ENCODE measurements at regions of chr19 and their contacts with region 1.

Region 1: GRCh38 chr19:50777754-50778303 is 7.6 kb downstream of the GPR32 start:
- DNase-seq: peak; percentile 15
- ATAC-seq: no peak
- H3K4me3 ChIP-seq: no peak overlapping the region
- H3K4me3 Mint-ChIP-seq: no peak overlapping the region
- H3K27ac ChIP-seq: no peak overlapping the region
- H3K27ac Mint-ChIP-seq: no peak overlapping the region
- H3K4me1 ChIP-seq: peaks cover 0 to 8% of the 10 kb centered on the region in 2 donors
- H3K4me1 Mint-ChIP-seq: peaks cover 4% of the 10 kb centered on the region
- H3K27me3 ChIP-seq: peaks cover 0 to 62% (median 26%) of the 10 kb centered on the region in 4 experiments
- H3K27me3 Mint-ChIP-seq: peaks cover 64% of the 10 kb centered on the region
- CTCF ChIP-seq: no peak

Region 2: GRCh38 chr19:50252111-50252886 is 525.5 kb before region 1 on chr19:
- CTCF ChIA-PET with region 1: interaction called, 17 read pairs
- POLR2A ChIA-PET with region 1: no interaction called
- intact Hi-C with region 1: no loop called
- DNase-seq: peak; percentile 61
- ATAC-seq: peak; percentile 45
- H3K4me3 ChIP-seq: no peak overlapping the region
- H3K4me3 Mint-ChIP-seq: no peak overlapping the region
- H3K27ac ChIP-seq: no peak overlapping the region
- H3K27ac Mint-ChIP-seq: no peak overlapping the region
- H3K4me1 ChIP-seq: no peaks in the 10 kb centered on the region
- H3K4me1 Mint-ChIP-seq: peaks cover 5% of the 10 kb centered on the region
- H3K27me3 ChIP-seq: peaks cover 0 to 9% (median 0%) of the 10 kb centered on the region in 4 experiments
- H3K27me3 Mint-ChIP-seq: peaks cover 18% of the 10 kb centered on the region
- CTCF ChIP-seq: peak; percentile 74

Region 3: DNA sequence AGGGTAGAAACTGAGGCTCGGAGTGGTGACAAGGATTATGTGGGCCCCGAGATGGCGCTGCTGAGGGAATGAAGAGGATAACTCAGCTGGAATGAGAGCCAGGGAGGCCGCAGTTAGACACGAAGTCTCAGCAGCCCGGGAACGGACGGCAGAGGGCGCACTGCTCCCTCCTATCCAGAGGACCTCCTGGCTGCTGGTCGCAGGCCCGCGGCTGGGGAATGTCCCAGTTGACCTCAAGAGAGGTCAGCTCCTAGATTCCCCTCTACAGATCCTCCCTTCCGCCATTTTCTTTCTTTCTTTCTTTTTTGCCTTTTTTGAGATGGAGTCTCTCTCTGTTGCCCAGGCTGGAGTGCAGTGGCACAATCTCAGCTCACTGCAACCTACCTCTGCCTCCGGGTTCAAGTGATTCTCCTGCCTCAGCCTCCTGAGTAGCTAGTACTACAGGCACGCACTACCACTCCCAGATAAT is 240.0 kb before region 1 on chr19:
- CTCF ChIA-PET with region 1: interaction called, 15 read pairs
- POLR2A ChIA-PET with region 1: no interaction called
- intact Hi-C with region 1: loop called (anchors 1 kb)
- DNase-seq: peak; percentile 66
- ATAC-seq: peak; percentile 36
- H3K4me3 ChIP-seq: no peak overlapping the region
- H3K4me3 Mint-ChIP-seq: no peak overlapping the region
- H3K27ac ChIP-seq: no peak overlapping the region
- H3K27ac Mint-ChIP-seq: no peak overlapping the region
- H3K4me1 ChIP-seq: no peaks in the 10 kb centered on the region
- H3K4me1 Mint-ChIP-seq: no peaks in the 10 kb centered on the region
- H3K27me3 ChIP-seq: peaks cover 0 to 8% (median 0%) of the 10 kb centered on the region in 4 experiments
- H3K27me3 Mint-ChIP-seq: peaks cover 13% of the 10 kb centered on the region
- CTCF ChIP-seq: peak; percentile 74

Region 4: GRCh38 chr19:50590191-50590590 is 187.6 kb before region 1 on chr19:
- CTCF ChIA-PET with region 1: no interaction called
- POLR2A ChIA-PET with region 1: no interaction called
- intact Hi-C with region 1: no loop called
- DNase-seq: no peak
- ATAC-seq: no peak
- H3K4me3 ChIP-seq: no peak overlapping the region
- H3K4me3 Mint-ChIP-seq: no peak overlapping the region
- H3K27ac ChIP-seq: no peak overlapping the region
- H3K27ac Mint-ChIP-seq: no peak overlapping the region
- H3K4me1 ChIP-seq: no peaks in the 10 kb centered on the region
- H3K4me1 Mint-ChIP-seq: no peaks in the 10 kb centered on the region
- H3K27me3 ChIP-seq: no peaks in the 10 kb centered on the region
- H3K27me3 Mint-ChIP-seq: peaks cover 20% of the 10 kb centered on the region
- CTCF ChIP-seq: no peak

Region 5: DNA sequence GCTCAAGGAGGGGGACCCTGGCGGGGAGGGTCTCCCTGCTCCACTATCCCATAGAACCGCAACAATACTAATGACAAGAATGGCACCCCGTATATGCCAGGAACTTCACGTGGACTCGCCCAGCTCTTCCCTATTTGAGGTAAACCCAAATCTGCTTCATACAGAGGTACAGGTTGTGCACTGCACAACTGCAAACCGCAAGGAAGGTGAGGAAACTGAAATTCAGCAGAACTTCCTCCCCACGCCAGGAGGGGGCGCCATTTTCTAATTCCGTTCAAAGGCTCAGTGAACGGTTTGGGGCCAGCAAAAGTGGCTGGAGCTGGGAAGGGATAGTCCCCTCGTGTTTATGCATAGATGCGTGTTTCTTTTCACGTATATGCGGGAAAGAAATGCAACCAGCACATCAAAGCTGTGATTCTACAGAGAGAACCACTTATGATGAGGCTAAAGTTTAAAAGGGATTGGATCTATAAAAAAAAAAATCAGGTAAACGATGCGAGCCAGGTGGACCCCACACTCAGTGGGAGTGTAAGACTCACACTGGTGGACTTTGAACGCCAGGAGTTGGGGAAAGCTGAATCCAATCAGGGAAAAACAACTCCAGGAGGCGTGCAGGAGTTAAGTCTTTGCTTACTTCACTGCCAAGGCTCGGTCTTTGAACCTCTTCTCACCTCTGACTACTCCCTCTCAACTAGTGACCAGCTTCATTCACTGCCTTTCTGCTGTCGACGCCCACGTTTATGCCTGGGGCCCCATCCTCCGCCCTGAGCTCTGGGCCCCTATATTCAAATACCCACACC is 108.3 kb before region 1 on chr19:
- CTCF ChIA-PET with region 1: interaction called, 6 read pairs
- POLR2A ChIA-PET with region 1: no interaction called
- intact Hi-C with region 1: loop called (anchors 2 kb)
- DNase-seq: peak; percentile 63
- ATAC-seq: no peak
- H3K4me3 ChIP-seq: no peak overlapping the region
- H3K4me3 Mint-ChIP-seq: no peak overlapping the region
- H3K27ac ChIP-seq: no peak overlapping the region
- H3K27ac Mint-ChIP-seq: no peak overlapping the region
- H3K4me1 ChIP-seq: peaks cover 8 to 18% of the 10 kb centered on the region in 2 donors
- H3K4me1 Mint-ChIP-seq: peaks cover 2% of the 10 kb centered on the region
- H3K27me3 ChIP-seq: peaks cover 0 to 45% (median 18%) of the 10 kb centered on the region in 4 experiments
- H3K27me3 Mint-ChIP-seq: peaks cover 42% of the 10 kb centered on the region
- CTCF ChIP-seq: peak; percentile 82

Measured in B cell (primary cell).